Natural killer cell (primary cell): ENCODE measurements at regions of chr10 and their contacts with region 1.

Region 1: DNA sequence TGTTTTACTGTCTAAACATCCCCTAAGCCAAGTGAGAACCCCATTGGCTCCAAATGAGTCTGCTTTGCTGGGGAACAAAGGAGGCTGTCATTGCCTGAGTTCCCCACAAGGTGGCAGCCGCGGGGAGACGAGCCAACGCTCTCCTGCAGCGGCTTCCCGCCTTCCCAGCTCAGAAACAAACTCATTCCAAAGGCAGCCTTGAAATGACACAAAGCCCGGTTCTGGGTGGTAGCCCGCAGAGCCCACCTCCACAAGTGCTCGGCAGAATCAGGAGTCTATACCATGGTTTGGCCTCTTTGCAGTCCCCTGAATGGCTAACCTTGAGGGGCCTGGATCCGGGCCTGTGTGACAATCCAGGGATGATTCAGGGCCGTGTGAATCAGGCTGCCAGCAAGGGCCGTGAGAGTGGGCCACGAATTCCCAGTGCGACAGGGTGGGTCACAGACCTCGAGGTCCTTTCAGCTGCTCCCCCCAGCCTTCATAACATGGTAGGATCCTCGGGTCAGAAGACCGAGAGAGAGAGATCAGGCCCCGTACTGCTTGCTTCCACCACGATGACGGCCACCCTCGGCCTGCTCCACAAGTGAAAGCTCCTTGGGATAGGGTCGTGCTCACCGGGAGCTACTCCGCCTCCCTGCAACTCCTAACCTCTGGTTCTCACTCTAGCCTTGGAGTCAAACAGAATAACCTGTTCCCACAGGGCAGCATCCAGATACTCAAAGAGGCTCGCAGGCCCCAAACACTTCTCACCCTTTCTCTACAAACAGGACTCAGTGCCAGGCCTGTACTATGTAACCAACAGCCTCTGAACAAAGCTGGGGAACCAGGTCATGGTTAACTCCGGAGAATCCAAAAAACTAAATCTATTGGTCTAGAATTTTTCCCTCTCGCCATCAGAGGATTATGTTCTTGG is 79.6 kb downstream of the DLG5 start:
- DNase-seq: peak; percentile 73 to 78
- ATAC-seq: peak; percentile 78 to 96 (median 92)
- H3K4me3 ChIP-seq: no peak overlapping the region
- H3K4me3 Mint-ChIP-seq: no peak overlapping the region
- H3K27ac ChIP-seq: no peak overlapping the region
- H3K27ac Mint-ChIP-seq: peak overlapping the region; percentile 59
- H3K4me1 ChIP-seq: peaks cover 8% of the 10 kb centered on the region
- H3K4me1 Mint-ChIP-seq: peaks cover 23 to 33% of the 10 kb centered on the region in 2 donors
- H3K27me3 ChIP-seq: no peaks in the 10 kb centered on the region
- H3K27me3 Mint-ChIP-seq: no peaks in the 10 kb centered on the region
- CTCF ChIP-seq: peak; percentile 87

Region 2: GRCh38 chr10:77926566-77927401 is 79.8 kb after region 1 on chr10 and contains the start of gene DLG5:
- intact Hi-C with region 1: loop called (anchors 2 kb)
- DNase-seq: peak; percentile 33 to 35
- ATAC-seq: peak; percentile 69 to 73 (median 70)
- H3K4me3 ChIP-seq: peak within 1 kb of the TSS; percentile 46
- H3K4me3 Mint-ChIP-seq: peak within 1 kb of the TSS; percentile 93
- H3K27ac ChIP-seq: no peak within 1 kb of the TSS
- H3K27ac Mint-ChIP-seq: peak within 1 kb of the TSS; percentile 67 to 72
- H3K4me1 ChIP-seq: peaks cover 18% of the 10 kb centered on the region
- H3K4me1 Mint-ChIP-seq: peaks cover 26 to 28% of the 10 kb centered on the region in 2 donors
- H3K27me3 ChIP-seq: peaks cover 10% of the 10 kb centered on the region
- H3K27me3 Mint-ChIP-seq: peaks cover 8% of the 10 kb centered on the region in 2 donors
- CTCF ChIP-seq: no peak
- total RNA-seq, gene DLG5: 52.8 to 75.0 (median 52.9) TPM

Region 3: GRCh38 chr10:77974396-77975074 is 127.6 kb after region 1 on chr10:
- intact Hi-C with region 1: loop called (anchors 1 kb)
- DNase-seq: peak in 1 of 2 donors; percentile 16
- ATAC-seq: peak in 1 of 3 donors; percentile 47
- H3K4me3 ChIP-seq: no peak overlapping the region
- H3K4me3 Mint-ChIP-seq: no peak overlapping the region
- H3K27ac ChIP-seq: no peak overlapping the region
- H3K27ac Mint-ChIP-seq: peak overlapping the region in 1 of 2 donors; percentile 8
- H3K4me1 ChIP-seq: peaks cover 6% of the 10 kb centered on the region
- H3K4me1 Mint-ChIP-seq: peaks cover 6 to 8% of the 10 kb centered on the region in 2 donors
- H3K27me3 ChIP-seq: no peaks in the 10 kb centered on the region
- H3K27me3 Mint-ChIP-seq: no peaks in the 10 kb centered on the region
- CTCF ChIP-seq: no peak

Region 4: DNA sequence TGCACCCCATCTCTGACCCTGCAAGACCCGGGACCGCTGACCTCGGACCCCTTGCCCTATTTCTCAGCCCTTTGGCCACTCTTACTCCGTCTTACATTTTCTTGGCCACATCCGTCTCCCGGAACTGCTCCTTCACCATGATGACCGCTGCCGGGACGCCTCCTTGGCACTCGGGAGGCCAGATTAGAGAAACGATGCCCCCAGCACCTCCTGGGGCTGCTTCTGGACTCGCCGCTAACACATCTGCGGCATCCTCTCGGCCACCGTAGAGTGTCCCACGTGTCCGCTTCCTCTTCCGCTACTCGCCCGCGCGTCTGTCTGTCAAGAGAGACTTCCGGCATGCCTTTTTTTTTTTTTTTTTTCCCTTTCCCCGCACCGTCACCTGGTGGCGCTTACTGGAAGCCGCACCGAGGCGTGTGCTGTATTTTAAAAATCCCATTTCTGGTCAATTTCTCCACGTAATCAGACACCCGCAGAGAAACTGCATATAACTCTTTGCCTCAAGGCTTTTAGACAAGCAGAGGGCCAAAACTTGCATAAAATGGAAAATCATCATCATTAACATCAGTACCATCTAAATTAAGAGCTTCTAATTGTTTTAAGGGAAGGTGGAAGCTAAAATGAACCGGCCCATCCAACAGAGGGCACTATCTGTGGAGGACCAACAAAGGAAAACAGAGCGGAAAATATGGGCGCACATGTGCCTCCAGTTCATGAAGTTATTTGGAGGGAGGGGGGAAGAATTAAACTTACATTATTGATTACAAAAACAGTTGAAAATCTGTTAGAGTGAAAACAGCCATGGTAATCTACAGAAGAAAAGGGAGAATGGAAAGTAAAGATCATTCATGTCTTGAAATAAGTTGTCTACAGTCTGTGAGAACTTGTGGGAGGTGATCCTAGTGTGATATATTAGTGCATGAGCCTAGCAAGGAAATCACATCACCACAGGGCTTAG is 182.6 kb after region 1 on chr10 and contains the start of gene POLR3A:
- intact Hi-C with region 1: loop called (anchors 5 kb)
- DNase-seq: peak; percentile 92 to 97
- ATAC-seq: peak; percentile 50 to 79 (median 69)
- H3K4me3 ChIP-seq: peak within 1 kb of the TSS; percentile 98
- H3K4me3 Mint-ChIP-seq: peak within 1 kb of the TSS; percentile 100
- H3K27ac ChIP-seq: peak within 1 kb of the TSS; percentile 69
- H3K27ac Mint-ChIP-seq: peak within 1 kb of the TSS; percentile 88 to 98
- H3K4me1 ChIP-seq: peaks cover 19% of the 10 kb centered on the region
- H3K4me1 Mint-ChIP-seq: peaks cover 38 to 39% of the 10 kb centered on the region in 2 donors
- H3K27me3 ChIP-seq: no peaks in the 10 kb centered on the region
- H3K27me3 Mint-ChIP-seq: no peaks in the 10 kb centered on the region
- CTCF ChIP-seq: peak; percentile 67
- total RNA-seq, gene POLR3A: 15.6 to 21.0 (median 17.9) TPM

Region 5: GRCh38 chr10:78875932-78876331 is 1029.0 kb after region 1 on chr10:
- intact Hi-C with region 1: no loop called
- DNase-seq: no peak
- ATAC-seq: no peak
- H3K4me3 ChIP-seq: no peak overlapping the region
- H3K4me3 Mint-ChIP-seq: no peak overlapping the region
- H3K27ac ChIP-seq: no peak overlapping the region
- H3K27ac Mint-ChIP-seq: no peak overlapping the region
- H3K4me1 ChIP-seq: no peaks in the 10 kb centered on the region
- H3K4me1 Mint-ChIP-seq: no peaks in the 10 kb centered on the region
- H3K27me3 ChIP-seq: peaks cover 4% of the 10 kb centered on the region
- H3K27me3 Mint-ChIP-seq: peaks cover 20 to 38% of the 10 kb centered on the region in 2 donors
- CTCF ChIP-seq: no peak